ENCODE measurements at regions of chr22 and their contacts with region 1.

Region 1: GRCh38 chr22:41822317-41823060 is 10.4 kb upstream of the SREBF2 start:
- DNase-seq: no peak
- ATAC-seq: peak; percentile 56
- H3K4me3 ChIP-seq: no peak overlapping the region
- H3K27ac ChIP-seq: no peak overlapping the region
- H3K4me1 ChIP-seq: peaks cover 13% of the 10 kb centered on the region
- H3K27me3 ChIP-seq: no peaks in the 10 kb centered on the region
- CTCF ChIP-seq: peak; percentile 57

Region 2: GRCh38 chr22:41946629-41947423 is 124.3 kb after region 1 on chr22 and contains the start of gene CENPM:
- intact Hi-C with region 1: loop called (anchors 10 kb)
- DNase-seq: peak; percentile 95
- ATAC-seq: peak; percentile 98
- H3K4me3 ChIP-seq: peak within 1 kb of the TSS; percentile 76
- H3K27ac ChIP-seq: no peak within 1 kb of the TSS
- H3K4me1 ChIP-seq: peaks cover 7% of the 10 kb centered on the region
- H3K27me3 ChIP-seq: no peaks in the 10 kb centered on the region
- CTCF ChIP-seq: no peak
- total RNA-seq, gene CENPM: 1.3 TPM

Region 3: DNA sequence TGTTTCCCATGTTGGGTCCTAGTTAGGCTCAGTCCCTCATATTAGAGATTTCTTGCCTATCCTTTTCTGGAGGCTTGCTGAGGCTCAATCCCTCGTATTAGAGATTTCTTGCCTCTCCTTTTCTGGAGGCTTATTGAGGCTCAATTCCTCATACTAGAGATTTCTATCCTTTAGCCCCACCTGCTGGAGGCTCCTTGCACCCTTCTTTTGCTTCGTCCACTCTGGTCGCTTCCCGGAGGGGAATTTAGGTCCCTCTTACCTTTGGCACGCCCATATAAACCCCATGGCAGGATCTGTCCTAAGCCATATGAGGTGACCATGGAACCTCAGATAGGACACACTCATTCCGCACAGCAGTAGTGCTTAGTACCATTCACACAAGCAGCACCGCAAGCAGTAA is 292.2 kb after region 1 on chr22:
- intact Hi-C with region 1: no loop called
- DNase-seq: no peak
- ATAC-seq: no peak
- H3K4me3 ChIP-seq: no peak overlapping the region
- H3K27ac ChIP-seq: no peak overlapping the region
- H3K4me1 ChIP-seq: peaks cover 7% of the 10 kb centered on the region
- H3K27me3 ChIP-seq: no peaks in the 10 kb centered on the region
- CTCF ChIP-seq: peak; percentile 38